GM12878 (cell line): ENCODE measurements at regions of chr2 and their contacts with region 1.

Region 1: DNA sequence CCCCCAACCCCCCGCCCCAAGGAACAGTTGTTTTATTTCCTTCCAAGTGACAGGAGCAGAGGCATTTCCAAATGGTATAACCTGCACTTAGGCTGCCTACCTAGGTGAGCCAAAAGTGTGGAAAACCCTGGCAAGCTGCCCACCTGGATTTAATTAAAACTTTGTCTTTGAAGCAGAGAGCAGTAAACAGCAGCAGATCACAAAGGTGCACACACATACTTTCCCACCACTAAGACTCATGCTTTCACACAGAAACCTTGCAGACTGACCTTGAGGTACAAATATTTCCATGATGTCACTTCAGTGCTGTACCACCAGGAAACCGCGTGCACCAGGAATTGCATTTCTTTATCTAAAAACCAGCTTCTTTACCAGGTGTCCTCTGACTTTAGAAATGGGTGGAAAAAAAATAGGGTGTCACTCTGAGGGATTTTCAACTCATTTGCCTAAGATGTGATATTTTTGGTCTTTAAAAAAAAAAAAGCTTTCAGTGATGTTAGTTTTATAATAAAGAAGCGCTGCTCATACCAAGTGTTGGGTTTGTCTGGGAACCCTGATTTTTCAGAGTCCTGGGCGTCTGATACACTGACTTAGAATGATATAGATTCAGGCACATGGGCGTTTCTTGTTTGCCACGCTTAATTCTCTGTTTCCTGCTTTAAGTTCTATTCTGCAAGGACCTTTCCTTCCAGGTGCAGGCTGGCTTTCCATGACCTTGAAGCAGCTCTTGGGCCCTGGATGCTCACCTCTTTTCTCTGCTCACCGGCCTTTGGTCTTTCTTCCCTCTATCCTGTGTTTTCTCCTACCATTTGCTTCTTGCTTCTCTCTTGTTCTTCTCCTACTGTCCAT is 70.7 kb upstream of the BCL2L11 start:
- DNase-seq: peak; percentile 63
- ATAC-seq: peak; percentile 74
- H3K4me3 ChIP-seq: no peak overlapping the region
- H3K27ac ChIP-seq: peak overlapping the region; percentile 42; the same call in 1 of the 2 replicates
- H3K4me1 ChIP-seq: peaks cover 17% of the 10 kb centered on the region
- H3K27me3 ChIP-seq: peaks cover 0 to 10% of the 10 kb centered on the region in 2 experiments; a peak in 3 of 4 replicates
- CTCF ChIP-seq: no peak
- EP300 ChIP-seq: peak; percentile 72 to 84
- POLR2A ChIP-seq: no peak
- RAD21 ChIP-seq: no peak

Region 2: DNA sequence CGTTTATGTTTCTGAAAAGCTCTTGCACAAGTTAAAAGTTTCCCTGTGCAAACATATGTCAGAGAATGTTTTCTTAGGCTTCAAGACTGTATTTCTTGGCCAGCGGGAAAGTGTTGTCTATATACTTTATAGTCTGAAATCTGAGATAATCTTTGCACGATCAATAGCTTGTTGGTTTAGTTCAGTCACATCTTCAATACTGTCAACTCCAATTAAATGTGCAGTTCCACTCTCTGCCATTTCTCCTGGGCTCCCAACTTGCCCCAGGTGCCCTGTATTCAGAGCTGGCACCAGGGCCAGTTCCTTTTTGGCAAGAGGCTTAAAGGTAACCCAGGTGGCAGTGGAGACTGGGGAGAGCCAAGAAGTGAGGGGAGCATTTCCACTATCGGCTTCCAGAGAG is 253.2 kb before region 1 on chr2:
- CTCF ChIA-PET with region 1: no interaction called
- POLR2A ChIA-PET with region 1: no interaction called
- RAD21 ChIA-PET with region 1: no interaction called
- SMC1A ChIA-PET with region 1: no interaction called
- in situ Hi-C with region 1: no loop called
- intact Hi-C with region 1: no loop called
- DNase-seq: no peak
- ATAC-seq: no peak
- H3K4me3 ChIP-seq: no peak overlapping the region
- H3K27ac ChIP-seq: no peak overlapping the region
- H3K4me1 ChIP-seq: no peaks in the 10 kb centered on the region
- H3K27me3 ChIP-seq: peaks cover 0 to 2% of the 10 kb centered on the region in 2 experiments; a peak in 1 of 4 replicates
- CTCF ChIP-seq: no peak
- EP300 ChIP-seq: no peak
- POLR2A ChIP-seq: no peak
- RAD21 ChIP-seq: no peak

Region 3: GRCh38 chr2:111030260-111030891 is 19.6 kb before region 1 on chr2:
- CTCF ChIA-PET with region 1: interaction called, 4 read pairs
- POLR2A ChIA-PET with region 1: interaction called, 4 read pairs
- RAD21 ChIA-PET with region 1: interaction called, 6 read pairs
- SMC1A ChIA-PET with region 1: interaction called, 18 read pairs
- in situ Hi-C with region 1: no loop called
- intact Hi-C with region 1: no loop called
- DNase-seq: no peak
- ATAC-seq: peak; percentile 81
- H3K4me3 ChIP-seq: no peak overlapping the region
- H3K27ac ChIP-seq: no peak overlapping the region
- H3K4me1 ChIP-seq: peaks cover 11% of the 10 kb centered on the region
- H3K27me3 ChIP-seq: peaks cover 0 to 11% of the 10 kb centered on the region in 2 experiments; a peak in 3 of 4 replicates
- CTCF ChIP-seq: no peak
- EP300 ChIP-seq: peak in 1 of 2 experiments; percentile 43; a peak in 2 of 4 replicates
- POLR2A ChIP-seq: no peak
- RAD21 ChIP-seq: no peak

Region 4: GRCh38 chr2:111037128-111037527 is 12.9 kb before region 1 on chr2:
- CTCF ChIA-PET with region 1: interaction called, 6 read pairs
- POLR2A ChIA-PET with region 1: interaction called, 7 read pairs
- RAD21 ChIA-PET with region 1: interaction called, 13 read pairs
- SMC1A ChIA-PET with region 1: interaction called, 18 read pairs
- in situ Hi-C with region 1: no loop called
- intact Hi-C with region 1: loop called (anchors 2 kb)
- DNase-seq: peak; percentile 31
- ATAC-seq: peak; percentile 80
- H3K4me3 ChIP-seq: no peak overlapping the region
- H3K27ac ChIP-seq: no peak overlapping the region
- H3K4me1 ChIP-seq: peaks cover 3% of the 10 kb centered on the region
- H3K27me3 ChIP-seq: peaks cover 2 to 6% of the 10 kb centered on the region in 2 experiments; a peak in 3 of 4 replicates
- CTCF ChIP-seq: no peak
- EP300 ChIP-seq: peak in 1 of 2 experiments; percentile 33; a peak in 1 of 4 replicates
- POLR2A ChIP-seq: no peak
- RAD21 ChIP-seq: no peak

Region 5: DNA sequence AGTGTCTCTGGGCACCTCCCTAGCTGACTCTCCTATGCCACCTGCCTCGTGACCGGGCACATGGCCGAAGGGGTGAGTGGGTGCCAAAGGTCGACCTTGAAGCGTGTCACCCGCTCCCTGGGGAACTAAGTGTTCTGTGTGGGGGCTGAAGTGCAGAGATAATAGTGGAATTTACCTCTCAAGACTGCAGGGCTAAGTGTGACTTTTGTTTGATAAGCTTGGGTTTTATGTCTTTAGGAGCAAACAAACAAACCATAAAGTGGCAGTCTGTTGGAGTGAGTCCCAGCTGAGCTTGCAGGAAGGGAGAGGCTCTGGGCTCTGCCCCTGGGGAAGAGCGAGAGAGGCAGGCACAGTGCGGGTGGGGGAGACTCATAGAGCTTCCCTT is 135.6 kb after region 1 on chr2:
- CTCF ChIA-PET with region 1: no interaction called
- POLR2A ChIA-PET with region 1: no interaction called
- RAD21 ChIA-PET with region 1: no interaction called
- SMC1A ChIA-PET with region 1: no interaction called
- in situ Hi-C with region 1: no loop called
- intact Hi-C with region 1: no loop called
- DNase-seq: no peak
- ATAC-seq: peak; percentile 62
- H3K4me3 ChIP-seq: no peak overlapping the region
- H3K27ac ChIP-seq: no peak overlapping the region
- H3K4me1 ChIP-seq: no peaks in the 10 kb centered on the region
- H3K27me3 ChIP-seq: peaks cover 0 to 22% of the 10 kb centered on the region in 2 experiments; a peak in 2 of 4 replicates
- CTCF ChIP-seq: no peak
- EP300 ChIP-seq: no peak
- POLR2A ChIP-seq: no peak
- RAD21 ChIP-seq: no peak